CD4-positive, alpha-beta memory T cell (primary cell): ENCODE measurements at regions of chr19 and their contacts with region 1.

Region 1: GRCh38 chr19:56252699-56253422 is 19.7 kb upstream of the EDDM13 start:
- DNase-seq: peak; percentile 50 to 69 (median 53)
- H3K4me3 ChIP-seq: no peak overlapping the region
- H3K4me3 Mint-ChIP-seq: peak overlapping the region in 1 of 8 donors; percentile 67
- H3K27ac ChIP-seq: no peak overlapping the region
- H3K27ac Mint-ChIP-seq: peak overlapping the region in 1 of 7 donors; percentile 49
- H3K4me1 ChIP-seq: no peaks in the 10 kb centered on the region
- H3K4me1 Mint-ChIP-seq: peaks cover 0 to 3% (median 0%) of the 10 kb centered on the region in 4 donors
- H3K27me3 ChIP-seq: no peaks in the 10 kb centered on the region
- H3K27me3 Mint-ChIP-seq: peaks cover 0 to 2% of the 10 kb centered on the region in 2 donors

Region 2: DNA sequence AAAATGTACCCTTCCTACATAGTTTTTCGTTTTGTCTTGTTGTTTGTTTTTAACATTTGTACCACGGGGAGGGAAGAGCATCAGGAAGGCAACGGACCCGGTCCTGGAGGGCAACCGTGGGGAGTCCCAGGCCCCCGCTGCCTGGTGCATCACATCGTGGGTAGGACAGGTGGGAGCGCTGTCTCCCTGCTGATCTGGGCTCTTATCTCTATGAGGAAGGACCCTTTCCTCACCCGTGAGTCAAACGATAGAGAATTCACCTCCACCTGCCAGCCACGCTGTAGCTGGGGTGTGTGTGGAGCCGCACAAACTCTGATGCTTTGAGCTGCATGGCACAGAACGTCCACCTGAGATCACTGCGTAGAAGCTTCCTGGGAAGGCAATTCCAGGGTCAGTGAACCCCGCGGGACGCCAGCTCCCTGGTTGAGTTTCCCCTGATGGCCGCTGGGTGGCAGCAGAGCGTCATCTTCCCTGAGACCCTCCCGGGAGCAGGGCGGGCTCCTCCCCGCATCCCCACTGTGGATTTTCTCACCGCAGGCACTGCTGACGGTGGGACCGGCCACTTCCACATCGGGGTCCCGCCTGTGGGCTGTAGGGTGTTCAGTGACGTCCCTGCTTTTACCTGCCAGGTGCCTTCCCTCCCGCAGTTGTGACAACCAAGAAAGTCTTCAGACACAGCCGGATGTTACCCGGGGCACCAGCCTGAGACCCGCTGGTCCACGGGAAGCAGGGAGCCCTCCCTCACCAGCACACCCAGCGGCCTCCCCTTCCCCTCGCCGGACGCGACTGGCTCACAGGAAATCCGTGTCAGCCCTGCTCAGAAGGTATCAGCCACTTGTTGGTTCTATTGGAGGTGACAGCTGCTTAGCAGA is 186.5 kb before region 1 on chr19:
- CTCF ChIA-PET with region 1: interaction called, 13 read pairs
- POLR2A ChIA-PET with region 1: no interaction called
- intact Hi-C with region 1: loop called (anchors 5 kb)
- DNase-seq: peak; percentile 50 to 61 (median 54)
- H3K4me3 ChIP-seq: peak overlapping the region in 1 of 2 donors; percentile 30
- H3K4me3 Mint-ChIP-seq: peak overlapping the region; percentile 64 to 77 (median 73)
- H3K27ac ChIP-seq: no peak overlapping the region
- H3K27ac Mint-ChIP-seq: peak overlapping the region in 4 of 7 donors; percentile 10 to 73 (median 24)
- H3K4me1 ChIP-seq: peaks cover 11% of the 10 kb centered on the region
- H3K4me1 Mint-ChIP-seq: peaks cover 3 to 13% (median 9%) of the 10 kb centered on the region in 4 donors
- H3K27me3 ChIP-seq: no peaks in the 10 kb centered on the region
- H3K27me3 Mint-ChIP-seq: peaks cover 22 to 31% of the 10 kb centered on the region in 2 donors

Region 3: GRCh38 chr19:56080669-56081401 is 172.0 kb before region 1 on chr19:
- CTCF ChIA-PET with region 1: interaction called, 21 read pairs
- POLR2A ChIA-PET with region 1: no interaction called
- intact Hi-C with region 1: no loop called
- DNase-seq: peak; percentile 47 to 74 (median 60)
- H3K4me3 ChIP-seq: peak overlapping the region; percentile 23 to 59
- H3K4me3 Mint-ChIP-seq: peak overlapping the region; percentile 79 to 94 (median 84)
- H3K27ac ChIP-seq: no peak overlapping the region
- H3K27ac Mint-ChIP-seq: peak overlapping the region in 2 of 7 donors; percentile 34 to 48
- H3K4me1 ChIP-seq: peaks cover 10% of the 10 kb centered on the region
- H3K4me1 Mint-ChIP-seq: peaks cover 10 to 15% (median 12%) of the 10 kb centered on the region in 4 donors
- H3K27me3 ChIP-seq: no peaks in the 10 kb centered on the region
- H3K27me3 Mint-ChIP-seq: peaks cover 0 to 5% of the 10 kb centered on the region in 2 donors

Region 4: GRCh38 chr19:56223481-56223880 is 29.4 kb before region 1 on chr19:
- CTCF ChIA-PET with region 1: no interaction called
- POLR2A ChIA-PET with region 1: no interaction called
- intact Hi-C with region 1: no loop called
- DNase-seq: no peak
- H3K4me3 ChIP-seq: no peak overlapping the region
- H3K4me3 Mint-ChIP-seq: no peak overlapping the region
- H3K27ac ChIP-seq: no peak overlapping the region
- H3K27ac Mint-ChIP-seq: no peak overlapping the region
- H3K4me1 ChIP-seq: no peaks in the 10 kb centered on the region
- H3K4me1 Mint-ChIP-seq: no peaks in the 10 kb centered on the region
- H3K27me3 ChIP-seq: no peaks in the 10 kb centered on the region
- H3K27me3 Mint-ChIP-seq: peaks cover 0 to 2% of the 10 kb centered on the region in 2 donors

Region 5: GRCh38 chr19:56266051-56266450 is 13.2 kb after region 1 on chr19:
- CTCF ChIA-PET with region 1: interaction called, 27 read pairs
- POLR2A ChIA-PET with region 1: no interaction called
- intact Hi-C with region 1: no loop called
- DNase-seq: no peak
- H3K4me3 ChIP-seq: no peak overlapping the region
- H3K4me3 Mint-ChIP-seq: no peak overlapping the region
- H3K27ac ChIP-seq: no peak overlapping the region
- H3K27ac Mint-ChIP-seq: no peak overlapping the region
- H3K4me1 ChIP-seq: no peaks in the 10 kb centered on the region
- H3K4me1 Mint-ChIP-seq: no peaks in the 10 kb centered on the region
- H3K27me3 ChIP-seq: no peaks in the 10 kb centered on the region
- H3K27me3 Mint-ChIP-seq: no peaks in the 10 kb centered on the region

Region 6: GRCh38 chr19:56333505-56333904 is 80.6 kb after region 1 on chr19:
- CTCF ChIA-PET with region 1: interaction called, 78 read pairs
- POLR2A ChIA-PET with region 1: interaction called, 3 read pairs
- intact Hi-C with region 1: loop called (anchors 1 kb)
- DNase-seq: peak in 4 of 5 donors; percentile 29 to 40 (median 40)
- H3K4me3 ChIP-seq: no peak overlapping the region
- H3K4me3 Mint-ChIP-seq: no peak overlapping the region
- H3K27ac ChIP-seq: no peak overlapping the region
- H3K27ac Mint-ChIP-seq: no peak overlapping the region
- H3K4me1 ChIP-seq: no peaks in the 10 kb centered on the region
- H3K4me1 Mint-ChIP-seq: no peaks in the 10 kb centered on the region
- H3K27me3 ChIP-seq: no peaks in the 10 kb centered on the region
- H3K27me3 Mint-ChIP-seq: peaks cover 3 to 6% of the 10 kb centered on the region in 2 donors

Region 7: GRCh38 chr19:56350416-56351045 is 97.7 kb after region 1 on chr19:
- CTCF ChIA-PET with region 1: interaction called, 10 read pairs
- POLR2A ChIA-PET with region 1: no interaction called
- intact Hi-C with region 1: loop called (anchors 1 kb)
- DNase-seq: peak; percentile 35 to 57 (median 46)
- H3K4me3 ChIP-seq: no peak overlapping the region
- H3K4me3 Mint-ChIP-seq: no peak overlapping the region
- H3K27ac ChIP-seq: no peak overlapping the region
- H3K27ac Mint-ChIP-seq: no peak overlapping the region
- H3K4me1 ChIP-seq: no peaks in the 10 kb centered on the region
- H3K4me1 Mint-ChIP-seq: peaks cover 0 to 1% (median 0%) of the 10 kb centered on the region in 4 donors
- H3K27me3 ChIP-seq: no peaks in the 10 kb centered on the region
- H3K27me3 Mint-ChIP-seq: peaks cover 1% of the 10 kb centered on the region in 2 donors